Naive thymus-derived CD4-positive, alpha-beta T cell (primary cell): ENCODE measurements at regions of chr18 and their contacts with region 1.

Region 1: DNA sequence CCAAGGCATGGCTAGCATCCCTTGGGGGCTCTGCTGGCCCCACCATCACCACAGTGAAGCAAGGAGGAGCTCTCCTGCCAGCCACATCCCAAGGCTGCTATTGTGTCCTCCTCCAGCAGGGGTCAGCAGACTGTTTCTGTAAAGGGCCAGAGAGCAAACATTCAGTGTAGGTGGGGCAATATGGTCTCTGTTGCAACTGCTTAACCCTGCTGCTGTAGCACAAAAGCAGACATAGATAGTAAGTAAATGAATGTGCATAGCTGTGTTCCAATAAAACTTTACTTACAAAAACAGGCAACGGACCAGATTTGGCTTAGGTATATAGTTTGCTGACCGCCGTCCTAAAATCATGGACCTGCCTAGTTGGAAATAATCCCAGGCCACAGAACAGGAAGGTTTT is 36.4 kb upstream of the ZBTB7C start:
- DNase-seq: peak; percentile 39 to 75 (median 68)
- ATAC-seq: peak; percentile 88
- H3K4me3 ChIP-seq: no peak overlapping the region
- H3K4me3 Mint-ChIP-seq: no peak overlapping the region
- H3K27ac ChIP-seq: no peak overlapping the region
- H3K27ac Mint-ChIP-seq: no peak overlapping the region
- H3K4me1 ChIP-seq: peaks cover 0 to 5% of the 10 kb centered on the region in 2 donors
- H3K4me1 Mint-ChIP-seq: peaks cover 0 to 13% (median 10%) of the 10 kb centered on the region in 7 donors
- H3K27me3 ChIP-seq: no peaks in the 10 kb centered on the region
- H3K27me3 Mint-ChIP-seq: peaks cover 49 to 56% (median 50%) of the 10 kb centered on the region in 5 donors

Region 2: DNA sequence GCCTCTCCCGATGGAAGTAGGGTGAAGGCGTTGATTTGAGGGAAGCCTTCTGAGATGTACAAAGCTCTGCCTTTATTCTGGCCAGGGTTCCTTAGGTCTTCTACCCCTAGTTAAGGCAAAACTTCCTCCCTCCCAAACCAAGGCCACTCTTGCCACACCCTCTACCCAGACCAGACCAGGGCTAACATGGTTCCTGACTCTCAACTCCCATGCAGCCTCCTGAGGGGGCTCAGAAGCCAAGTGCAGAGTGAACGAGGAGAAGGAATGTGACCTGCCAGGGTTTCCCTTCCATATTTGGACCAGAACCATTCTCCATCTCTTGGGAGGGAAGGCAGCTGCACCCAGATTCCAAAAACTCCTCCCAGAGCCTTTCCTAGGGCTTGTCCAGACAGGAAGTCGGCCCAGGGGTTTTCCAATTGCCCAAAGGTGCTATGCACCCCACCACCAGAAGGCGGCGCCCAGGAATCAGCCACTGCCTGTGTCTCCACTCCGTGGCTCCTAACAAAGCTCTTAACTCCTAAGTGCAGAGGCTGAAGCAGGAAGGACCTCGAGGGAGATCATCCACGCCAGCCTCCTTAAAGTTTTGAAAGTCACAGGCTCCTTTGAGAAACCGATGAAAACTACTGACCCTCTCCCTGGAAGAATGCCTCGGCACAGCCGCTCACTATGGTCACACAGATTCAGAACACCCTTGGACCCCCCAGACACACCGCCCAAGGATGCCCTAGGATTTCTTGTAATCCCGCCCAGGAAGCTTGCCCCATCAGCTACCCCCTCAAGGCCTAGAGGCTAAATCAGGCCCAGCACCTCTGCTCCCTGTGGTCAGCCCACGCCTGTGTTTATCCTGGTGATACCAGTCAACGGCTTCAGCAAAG is 672.9 kb before region 1 on chr18:
- CTCF ChIA-PET with region 1: interaction called, 4 read pairs
- POLR2A ChIA-PET with region 1: no interaction called
- intact Hi-C with region 1: loop called in 1 of 2 experiments (anchors 5 kb)
- DNase-seq: peak in 7 of 9 donors; percentile 41 to 77 (median 50)
- ATAC-seq: peak; percentile 69
- H3K4me3 ChIP-seq: no peak overlapping the region
- H3K4me3 Mint-ChIP-seq: peak overlapping the region in 1 of 10 donors; percentile 4
- H3K27ac ChIP-seq: no peak overlapping the region
- H3K27ac Mint-ChIP-seq: no peak overlapping the region
- H3K4me1 ChIP-seq: no peaks in the 10 kb centered on the region
- H3K4me1 Mint-ChIP-seq: peaks cover 0 to 3% (median 0%) of the 10 kb centered on the region in 7 donors
- H3K27me3 ChIP-seq: no peaks in the 10 kb centered on the region
- H3K27me3 Mint-ChIP-seq: peaks cover 0 to 6% (median 4%) of the 10 kb centered on the region in 5 donors

Region 3: GRCh38 chr18:48030616-48031480 is 414.7 kb before region 1 on chr18:
- CTCF ChIA-PET with region 1: no interaction called
- POLR2A ChIA-PET with region 1: no interaction called
- intact Hi-C with region 1: loop called in 1 of 2 experiments (anchors 1 kb)
- DNase-seq: no peak
- ATAC-seq: no peak
- H3K4me3 ChIP-seq: no peak overlapping the region
- H3K4me3 Mint-ChIP-seq: no peak overlapping the region
- H3K27ac ChIP-seq: no peak overlapping the region
- H3K27ac Mint-ChIP-seq: peak overlapping the region in 2 of 9 donors; percentile 15 to 30
- H3K4me1 ChIP-seq: no peaks in the 10 kb centered on the region
- H3K4me1 Mint-ChIP-seq: peaks cover 0 to 2% (median 0%) of the 10 kb centered on the region in 7 donors
- H3K27me3 ChIP-seq: no peaks in the 10 kb centered on the region
- H3K27me3 Mint-ChIP-seq: peaks cover 0 to 4% (median 0%) of the 10 kb centered on the region in 5 donors

Region 4: GRCh38 chr18:48455555-48456478 is 10.3 kb after region 1 on chr18:
- CTCF ChIA-PET with region 1: interaction called, 34 read pairs
- POLR2A ChIA-PET with region 1: no interaction called
- intact Hi-C with region 1: loop called in 1 of 2 experiments (anchors 1 kb)
- DNase-seq: peak in 8 of 9 donors; percentile 18 to 65 (median 60)
- ATAC-seq: peak; percentile 82
- H3K4me3 ChIP-seq: no peak overlapping the region
- H3K4me3 Mint-ChIP-seq: peak overlapping the region; percentile 19 to 84 (median 70)
- H3K27ac ChIP-seq: no peak overlapping the region
- H3K27ac Mint-ChIP-seq: peak overlapping the region in 8 of 9 donors; percentile 14 to 88 (median 54)
- H3K4me1 ChIP-seq: peaks cover 3 to 36% of the 10 kb centered on the region in 2 donors
- H3K4me1 Mint-ChIP-seq: peaks cover 13 to 47% (median 39%) of the 10 kb centered on the region in 7 donors
- H3K27me3 ChIP-seq: peaks cover 0 to 7% of the 10 kb centered on the region in 2 donors
- H3K27me3 Mint-ChIP-seq: peaks cover 44 to 64% (median 59%) of the 10 kb centered on the region in 5 donors

Region 5: GRCh38 chr18:48470484-48471180 is 25.1 kb after region 1 on chr18:
- CTCF ChIA-PET with region 1: interaction called, 27 read pairs
- POLR2A ChIA-PET with region 1: no interaction called
- intact Hi-C with region 1: loop called (anchors 1 to 2 kb)
- DNase-seq: no peak
- ATAC-seq: no peak
- H3K4me3 ChIP-seq: no peak overlapping the region
- H3K4me3 Mint-ChIP-seq: no peak overlapping the region
- H3K27ac ChIP-seq: no peak overlapping the region
- H3K27ac Mint-ChIP-seq: no peak overlapping the region
- H3K4me1 ChIP-seq: no peaks in the 10 kb centered on the region
- H3K4me1 Mint-ChIP-seq: no peaks in the 10 kb centered on the region
- H3K27me3 ChIP-seq: no peaks in the 10 kb centered on the region
- H3K27me3 Mint-ChIP-seq: peaks cover 38 to 54% (median 50%) of the 10 kb centered on the region in 5 donors